Right ventricle myocardium inferior (tissue), 1 donor: ENCODE measurements at regions of chr15 and their contacts with region 1.

Region 1: DNA sequence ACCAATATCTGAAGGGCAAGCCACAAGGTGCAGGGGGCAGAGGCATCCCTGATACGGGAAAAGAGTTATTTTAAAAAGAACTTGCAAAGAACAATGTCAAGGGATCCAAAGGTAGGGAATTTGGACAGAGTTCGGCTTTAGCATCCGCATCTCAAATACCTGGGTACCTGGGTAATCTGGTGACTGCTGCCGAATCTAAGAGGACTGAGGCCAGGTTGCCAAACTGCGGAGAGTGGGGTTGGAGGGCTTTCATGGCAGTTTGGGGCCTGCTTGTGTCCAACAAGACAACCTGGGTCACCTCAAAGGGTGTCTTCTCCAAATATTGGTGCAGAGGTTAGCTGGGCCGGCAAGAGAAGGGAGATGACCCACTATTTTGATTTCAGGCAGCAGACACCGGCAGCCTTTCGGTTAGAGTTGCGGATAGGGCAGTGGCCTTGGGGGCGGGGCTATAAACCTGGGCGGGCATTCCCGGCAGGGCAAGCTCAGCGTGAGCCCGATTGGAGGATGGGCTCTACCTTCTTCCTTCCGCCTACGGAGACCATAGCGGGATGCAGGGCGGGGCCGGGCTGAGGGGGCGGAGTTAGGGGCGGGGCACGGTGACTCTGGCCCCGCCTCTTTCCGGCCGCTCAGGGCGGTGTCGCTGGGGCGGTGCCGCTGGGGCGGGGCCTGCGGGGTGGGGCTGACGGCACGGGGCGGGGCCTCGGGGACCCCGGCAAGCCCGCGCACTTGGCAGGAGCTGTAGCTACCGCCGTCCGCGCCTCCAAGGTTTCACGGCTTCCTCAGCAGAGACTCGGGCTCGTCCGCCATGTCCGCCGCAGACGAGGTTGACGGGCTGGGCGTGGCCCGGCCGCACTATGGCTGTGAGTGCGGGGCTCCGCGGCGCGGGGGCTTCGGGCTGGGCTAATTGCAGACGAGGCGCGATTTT is at the start of gene IQGAP1:
- DNase-seq: peak; percentile 99
- ATAC-seq: peak; percentile 99
- total RNA-seq, gene IQGAP1: 47.6 TPM

Region 2: DNA sequence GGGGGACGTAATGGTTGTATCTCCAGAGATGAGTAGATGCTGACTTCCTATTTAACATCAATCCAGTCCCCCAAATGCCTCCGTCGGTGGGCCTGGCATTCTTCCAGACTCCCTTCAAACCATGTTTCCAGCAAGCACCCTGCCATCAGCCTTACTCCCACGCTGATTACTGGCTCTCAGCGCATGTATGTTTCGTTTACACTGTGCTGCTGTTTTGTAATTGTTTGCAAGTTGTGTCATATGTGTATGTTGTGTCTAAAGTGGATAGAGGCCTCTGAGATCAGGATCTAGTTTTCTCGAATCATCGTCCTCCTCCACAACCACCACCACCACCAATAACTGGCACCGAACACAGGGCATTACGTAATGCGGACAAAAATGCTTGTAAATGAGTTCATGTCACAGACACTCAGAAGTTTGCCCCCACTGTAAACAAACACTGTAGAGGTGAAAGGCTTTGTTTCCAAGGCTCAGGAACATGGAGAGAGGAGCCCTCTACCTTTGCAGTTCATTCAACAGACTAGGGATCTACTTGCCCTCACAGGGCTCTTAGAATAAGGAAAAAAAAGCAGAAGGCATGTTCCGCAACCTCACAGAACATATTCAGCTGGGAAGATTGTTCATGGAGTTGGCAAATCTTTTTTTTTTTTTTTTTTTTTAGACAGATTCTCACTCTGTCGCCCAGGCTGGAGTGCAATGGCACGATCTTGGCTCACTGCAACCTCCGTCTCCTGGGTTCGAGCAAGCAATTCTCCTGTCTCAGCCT is 232.8 kb before region 1 on chr15:
- intact Hi-C with region 1: no loop called
- DNase-seq: no peak
- ATAC-seq: no peak

Region 3: DNA sequence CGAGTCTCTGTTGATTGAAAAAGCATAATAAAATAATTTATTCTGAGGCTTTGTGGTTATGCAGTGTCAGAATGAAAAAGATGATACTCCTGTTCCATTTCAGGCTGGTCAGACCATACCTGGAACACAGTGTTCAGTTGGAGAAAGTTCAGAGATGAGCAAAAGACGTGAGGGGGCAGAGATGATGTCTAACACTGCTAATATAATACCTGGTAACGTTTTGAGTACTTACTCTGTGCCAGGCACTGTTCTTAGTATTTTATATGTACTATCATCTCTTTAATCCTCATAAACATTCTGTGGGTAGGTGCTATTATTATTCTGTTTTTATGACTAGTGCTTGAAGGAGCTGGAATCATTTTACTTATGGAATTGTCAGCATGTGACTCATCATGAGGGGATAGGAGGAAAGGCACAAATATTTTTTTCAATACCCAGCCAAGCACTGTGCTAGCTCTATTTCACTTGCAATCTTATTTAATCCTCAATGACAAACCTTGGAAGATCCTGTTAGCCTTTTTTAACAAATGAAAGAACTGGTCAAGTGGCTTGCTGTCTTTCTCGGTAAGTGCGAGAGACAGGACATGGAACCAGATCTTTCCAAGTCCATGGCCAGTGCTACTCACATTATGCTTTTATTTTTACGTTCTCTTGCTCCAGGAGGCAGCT is 32.1 kb after region 1 on chr15:
- intact Hi-C with region 1: loop called (anchors 5 kb)
- DNase-seq: no peak
- ATAC-seq: peak; percentile 59

Region 4: GRCh38 chr15:90465140-90465922 is 77.5 kb after region 1 on chr15:
- intact Hi-C with region 1: loop called (anchors 1 kb)
- DNase-seq: no peak
- ATAC-seq: peak; percentile 55

Region 5: DNA sequence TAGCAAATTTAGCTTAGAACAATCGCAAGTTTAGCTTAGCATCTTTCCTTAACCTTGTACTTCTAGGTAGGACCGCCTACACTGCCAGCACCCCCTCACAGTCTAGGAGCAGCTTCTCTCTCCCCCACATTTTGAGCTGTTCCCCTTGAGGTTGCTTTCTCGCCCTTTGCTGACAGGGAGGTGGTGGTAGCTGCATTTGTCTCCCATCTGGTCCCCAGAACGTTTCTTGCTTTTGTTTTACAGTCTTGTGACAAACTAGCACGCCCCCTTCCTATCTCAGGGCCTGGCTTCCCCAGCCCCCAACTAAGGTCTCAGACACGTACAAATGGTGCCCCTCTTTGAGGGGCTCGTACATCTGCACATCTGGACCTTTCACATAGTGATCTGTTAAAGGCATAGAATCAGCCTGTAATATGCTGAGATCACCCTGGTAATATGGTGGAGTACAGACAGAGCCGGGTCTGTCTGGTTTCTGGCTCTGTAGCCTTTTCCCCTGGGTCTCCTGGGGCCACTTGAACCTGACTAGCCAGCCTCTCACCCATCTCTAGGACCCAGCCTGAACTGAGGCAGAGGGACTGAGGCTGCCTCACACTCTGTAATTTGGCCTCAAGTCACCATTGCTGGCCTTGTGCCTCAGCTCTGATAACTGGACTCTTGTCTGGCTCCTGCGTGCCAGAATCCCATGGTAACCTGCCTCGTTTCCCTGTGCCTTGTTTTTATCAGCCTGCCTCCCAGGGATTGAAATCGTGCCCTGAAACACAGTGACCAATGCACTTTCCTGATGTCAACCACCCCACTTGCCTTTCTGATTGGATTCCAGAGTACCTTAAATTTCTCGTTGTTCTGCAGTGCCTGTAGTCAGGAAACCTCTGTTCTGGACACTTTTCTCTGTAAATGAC is 169.6 kb after region 1 on chr15:
- intact Hi-C with region 1: no loop called
- DNase-seq: peak; percentile 92
- ATAC-seq: peak; percentile 84